Gastrocnemius medialis (tissue), 4 donors: ENCODE measurements at regions of chr6 and their contacts with region 1.

Region 1: DNA sequence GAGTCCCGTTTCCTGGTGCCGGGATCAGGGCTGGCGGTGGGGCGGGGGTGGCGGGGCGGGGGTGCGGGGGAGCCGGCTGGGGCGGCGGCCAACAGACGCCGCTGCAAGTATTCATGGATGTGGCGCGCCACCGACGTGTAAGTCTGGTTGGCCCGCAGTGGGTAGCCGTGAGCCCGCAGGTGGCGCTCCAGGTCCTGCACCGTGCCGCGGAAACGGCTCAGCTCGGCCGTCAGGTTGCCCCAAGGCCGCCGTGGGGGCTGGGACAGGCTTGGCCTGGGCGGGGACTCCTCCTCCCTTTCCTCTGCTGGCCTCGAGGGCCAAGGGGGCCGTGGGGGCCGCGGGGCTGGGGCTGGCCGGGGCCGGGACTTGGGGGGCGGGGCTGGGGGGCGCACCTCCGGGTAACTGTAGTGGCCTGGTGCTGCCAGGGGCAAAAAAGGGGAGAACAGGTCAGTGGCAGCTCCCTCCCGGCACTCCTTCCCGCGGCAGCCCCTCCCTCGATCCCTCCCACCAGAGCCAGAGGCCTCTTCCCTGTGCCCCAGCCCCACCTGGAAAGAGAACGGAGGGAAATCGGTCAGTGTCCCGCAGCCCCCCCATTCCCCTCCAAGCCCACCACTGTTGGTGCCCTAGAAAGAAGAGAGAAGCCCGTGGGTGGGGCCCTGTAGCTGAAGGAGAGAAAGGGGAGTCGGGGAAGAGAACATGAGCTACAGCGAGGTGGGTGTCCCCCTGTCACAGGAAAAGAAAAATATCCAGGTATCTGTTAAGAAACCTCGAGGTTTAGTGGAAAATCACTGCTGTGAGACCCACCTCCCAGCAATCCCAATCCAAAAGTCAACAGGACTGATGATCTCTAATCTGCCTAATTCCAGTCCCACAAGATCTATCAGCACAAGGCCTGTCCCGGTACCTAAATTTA is 21.3 kb downstream of the TNXB start:
- DNase-seq: peak; percentile 28 to 46
- ATAC-seq: peak; percentile 36 to 42
- H3K4me3 ChIP-seq: peak overlapping the region in 1 of 4 donors; percentile 28
- H3K27ac ChIP-seq: peak overlapping the region; percentile 69 to 77 (median 74)
- H3K4me1 ChIP-seq: no peaks in the 10 kb centered on the region
- H3K27me3 ChIP-seq: peaks cover 0 to 5% (median 2%) of the 10 kb centered on the region in 3 donors
- CTCF ChIP-seq: peak in 3 of 5 experiments; percentile 19 to 52 (median 49)
- POLR2A ChIP-seq: no peak

Region 2: DNA sequence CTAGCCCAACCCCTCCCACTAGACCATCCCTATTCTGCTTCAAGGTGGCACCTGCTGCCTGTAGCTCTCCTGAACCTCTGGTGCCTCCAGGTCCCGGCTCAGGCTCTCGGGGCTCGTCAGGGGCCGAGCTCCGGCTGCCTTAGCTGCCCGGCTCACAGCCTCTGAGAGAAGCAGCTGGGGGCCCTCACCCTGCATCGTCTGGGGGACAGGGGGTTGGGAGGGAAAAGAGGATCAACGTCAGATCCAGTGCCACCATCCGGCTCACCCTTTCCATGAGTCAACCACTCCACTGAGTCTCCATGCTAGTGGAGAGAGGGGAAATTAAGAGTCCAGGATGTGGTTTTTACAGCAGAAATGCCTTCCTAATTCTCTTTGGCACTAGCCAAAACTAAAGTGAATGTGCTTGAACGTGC is 448.4 kb before region 1 on chr6:
- in situ Hi-C with region 1: no loop called
- intact Hi-C with region 1: no loop called
- DNase-seq: no peak
- ATAC-seq: no peak
- H3K4me3 ChIP-seq: no peak overlapping the region
- H3K27ac ChIP-seq: peak overlapping the region in 1 of 4 donors; percentile 42
- H3K4me1 ChIP-seq: no peaks in the 10 kb centered on the region
- H3K27me3 ChIP-seq: no peaks in the 10 kb centered on the region
- CTCF ChIP-seq: no peak
- POLR2A ChIP-seq: no peak

Region 3: GRCh38 chr6:32113386-32114352 is 25.8 kb after region 1 on chr6:
- in situ Hi-C with region 1: no loop called
- intact Hi-C with region 1: loop called (anchors 2 kb)
- DNase-seq: peak; percentile 66 to 79
- ATAC-seq: peak; percentile 56 to 64
- H3K4me3 ChIP-seq: no peak overlapping the region
- H3K27ac ChIP-seq: peak overlapping the region; percentile 33 to 77 (median 64)
- H3K4me1 ChIP-seq: peaks cover 16 to 28% of the 10 kb centered on the region in 2 donors
- H3K27me3 ChIP-seq: peaks cover 4 to 20% (median 4%) of the 10 kb centered on the region in 3 donors
- CTCF ChIP-seq: no peak
- POLR2A ChIP-seq: no peak

Region 4: DNA sequence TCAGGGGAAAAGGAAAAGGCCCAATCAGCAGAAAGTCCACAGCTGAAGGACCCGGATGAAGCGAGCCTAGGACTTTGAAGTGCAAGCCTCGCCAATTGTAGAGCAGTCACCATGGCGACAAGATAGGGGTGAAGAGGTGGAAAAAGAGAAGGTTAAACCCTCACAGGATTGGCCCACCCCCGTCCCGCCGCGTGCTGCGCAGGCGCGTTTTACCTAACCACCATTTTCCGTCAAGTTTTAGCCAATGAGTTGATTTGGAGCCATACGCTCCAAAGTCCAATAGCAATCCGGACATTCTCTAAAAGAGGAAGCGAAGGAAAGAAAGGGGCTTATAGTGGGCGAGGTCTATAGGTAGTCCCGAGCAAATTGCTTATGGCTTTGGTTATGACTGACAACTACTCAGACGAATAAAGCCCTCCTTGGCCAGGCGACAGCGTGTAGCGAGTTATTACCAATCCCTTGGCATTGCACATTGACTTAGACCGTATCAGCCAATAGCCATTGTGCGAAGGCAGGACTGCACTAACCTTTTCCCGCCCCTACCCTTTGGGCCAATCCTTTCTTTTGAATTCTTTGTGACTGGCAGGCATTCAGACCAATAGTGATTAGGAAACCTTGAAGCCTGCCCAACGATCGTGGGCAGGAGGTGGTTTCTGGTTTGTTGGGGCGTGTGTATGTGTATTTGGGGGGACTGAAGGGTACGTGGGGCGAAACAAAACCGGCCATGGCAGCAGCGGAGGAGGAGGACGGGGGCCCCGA is 90.1 kb after region 1 on chr6 and contains the start of gene RNF5:
- in situ Hi-C with region 1: no loop called
- intact Hi-C with region 1: no loop called
- DNase-seq: peak; percentile 98 to 99
- ATAC-seq: peak; percentile 84 to 88
- H3K4me3 ChIP-seq: peak within 1 kb of the TSS; percentile 81 to 99 (median 96)
- H3K27ac ChIP-seq: peak within 1 kb of the TSS; percentile 92 to 99 (median 96)
- H3K4me1 ChIP-seq: peaks cover 41 to 46% of the 10 kb centered on the region in 2 donors
- H3K27me3 ChIP-seq: no peaks in the 10 kb centered on the region
- CTCF ChIP-seq: no peak
- POLR2A ChIP-seq: peak; percentile 46 to 63
- total RNA-seq, gene RNF5: 54.6 to 98.3 (median 78.1) TPM